Colonic mucosa (tissue), 4 donors: ENCODE measurements at regions of chr17 and their contacts with region 1.

Region 1: DNA sequence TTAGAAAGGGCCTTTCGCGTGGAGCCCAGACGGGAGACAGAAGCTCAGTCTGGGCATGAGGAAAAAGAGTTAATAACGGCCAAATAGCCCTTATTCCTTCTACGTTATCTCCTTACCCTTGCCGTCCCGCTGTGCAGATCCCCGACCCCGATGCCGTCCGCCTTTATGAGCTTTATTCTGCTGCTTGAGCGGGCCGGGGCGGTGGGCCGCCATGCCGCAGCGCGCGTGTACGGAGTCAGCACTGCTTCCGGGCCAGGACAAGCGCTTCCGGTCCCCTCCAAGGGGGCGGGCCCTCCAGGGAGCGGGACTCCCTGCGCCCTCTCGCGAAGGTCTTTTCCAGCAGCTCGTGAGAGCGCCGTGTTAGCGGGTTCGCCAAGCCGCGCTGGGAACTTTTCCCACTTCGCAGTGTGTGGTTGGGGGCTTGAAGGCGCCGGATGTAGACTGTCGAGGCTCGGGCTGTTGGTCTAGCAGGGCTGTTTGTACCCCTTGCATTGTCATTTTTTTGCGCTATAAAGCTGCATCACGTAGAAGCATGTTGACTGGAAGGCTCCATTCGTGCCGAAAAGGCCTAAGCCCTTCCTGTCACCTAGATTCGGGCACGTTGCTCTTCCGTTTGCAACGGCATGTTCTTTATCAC is at the start of gene TSR1:
- DNase-seq: peak; percentile 93
- H3K4me3 ChIP-seq: peak within 1 kb of the TSS; percentile 64
- H3K27ac ChIP-seq: peak within 1 kb of the TSS; percentile 83
- H3K4me1 ChIP-seq: peaks cover 5% of the 10 kb centered on the region
- H3K27me3 ChIP-seq: no peaks in the 10 kb centered on the region
- CTCF ChIP-seq: no peak
- total RNA-seq, gene TSR1: 13.7 to 28.5 TPM

Region 2: GRCh38 chr17:2303204-2304188 is 32.8 kb before region 1 on chr17 and contains the starts of genes SMG6 and SRR:
- intact Hi-C with region 1: loop called (anchors 5 kb)
- DNase-seq: peak; percentile 94
- H3K4me3 ChIP-seq: peak within 1 kb of the TSS; percentile 92
- H3K27ac ChIP-seq: peak within 1 kb of the TSS; percentile 84
- H3K4me1 ChIP-seq: no peaks in the 10 kb centered on the region
- H3K27me3 ChIP-seq: no peaks in the 10 kb centered on the region
- CTCF ChIP-seq: no peak
- total RNA-seq, gene SMG6: 18.3 to 23.6 TPM
- total RNA-seq, gene SRR: 9.0 to 11.0 TPM

Region 3: GRCh38 chr17:2421315-2422147 is 85.2 kb after region 1 on chr17:
- intact Hi-C with region 1: no loop called
- DNase-seq: no peak
- H3K4me3 ChIP-seq: no peak overlapping the region
- H3K27ac ChIP-seq: no peak overlapping the region
- H3K4me1 ChIP-seq: no peaks in the 10 kb centered on the region
- H3K27me3 ChIP-seq: no peaks in the 10 kb centered on the region
- CTCF ChIP-seq: no peak

Region 4: GRCh38 chr17:2435181-2435741 is 98.9 kb after region 1 on chr17:
- intact Hi-C with region 1: no loop called
- DNase-seq: no peak
- H3K4me3 ChIP-seq: no peak overlapping the region
- H3K27ac ChIP-seq: no peak overlapping the region
- H3K4me1 ChIP-seq: no peaks in the 10 kb centered on the region
- H3K27me3 ChIP-seq: no peaks in the 10 kb centered on the region
- CTCF ChIP-seq: no peak

Region 5: GRCh38 chr17:2547176-2547575 is 210.8 kb after region 1 on chr17:
- intact Hi-C with region 1: no loop called
- DNase-seq: no peak
- H3K4me3 ChIP-seq: no peak overlapping the region
- H3K27ac ChIP-seq: no peak overlapping the region
- H3K4me1 ChIP-seq: no peaks in the 10 kb centered on the region
- H3K27me3 ChIP-seq: no peaks in the 10 kb centered on the region
- CTCF ChIP-seq: no peak